Uterus (tissue), 4 donors: ENCODE measurements at regions of chr10 and their contacts with region 1.

Region 1: GRCh38 chr10:70549962-70550458 is 52.5 kb downstream of the PRF1 start:
- DNase-seq: peak; percentile 58 to 71
- H3K4me3 ChIP-seq: no peak overlapping the region
- H3K27ac ChIP-seq: no peak overlapping the region
- H3K4me1 ChIP-seq: no peaks in the 10 kb centered on the region
- H3K27me3 ChIP-seq: no peaks in the 10 kb centered on the region
- CTCF ChIP-seq: peak; percentile 76 to 88 (median 84)
- POLR2A ChIP-seq: no peak

Region 2: DNA sequence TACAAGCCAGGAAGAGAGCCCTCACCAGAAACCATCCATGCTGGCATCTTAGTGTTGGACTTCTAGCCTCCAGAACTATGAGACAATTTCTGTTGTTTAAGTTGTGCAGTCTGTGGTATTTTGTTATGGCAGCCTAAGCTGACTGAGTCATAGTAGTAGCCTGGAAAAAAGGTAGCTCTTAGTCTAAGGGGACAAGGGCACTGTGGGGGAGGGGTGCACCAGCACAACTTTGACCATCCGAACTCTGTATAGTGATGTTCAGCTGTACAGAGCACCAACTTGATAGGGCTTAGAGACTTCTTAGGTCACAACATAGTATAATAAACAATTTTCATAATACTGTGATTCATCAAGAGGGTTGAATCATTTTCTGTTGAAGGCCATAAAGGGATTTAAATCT is 131.8 kb before region 1 on chr10:
- intact Hi-C with region 1: no loop called
- DNase-seq: no peak
- H3K4me3 ChIP-seq: no peak overlapping the region
- H3K27ac ChIP-seq: no peak overlapping the region
- H3K4me1 ChIP-seq: no peaks in the 10 kb centered on the region
- H3K27me3 ChIP-seq: no peaks in the 10 kb centered on the region
- CTCF ChIP-seq: no peak
- POLR2A ChIP-seq: no peak

Region 3: GRCh38 chr10:70761031-70761601 is 211.1 kb after region 1 on chr10:
- intact Hi-C with region 1: loop called (anchors 5 kb)
- DNase-seq: no peak
- H3K4me3 ChIP-seq: no peak overlapping the region
- H3K27ac ChIP-seq: no peak overlapping the region
- H3K4me1 ChIP-seq: no peaks in the 10 kb centered on the region
- H3K27me3 ChIP-seq: no peaks in the 10 kb centered on the region
- CTCF ChIP-seq: no peak
- POLR2A ChIP-seq: no peak